ENCODE measurements at regions of chrX and their contacts with region 1.

Region 1: GRCh38 chrX:23901805-23902204 is 5.9 kb downstream of the APOO start:
- DNase-seq: peak; percentile 57 to 65
- ATAC-seq: peak; percentile 91

Region 2: DNA sequence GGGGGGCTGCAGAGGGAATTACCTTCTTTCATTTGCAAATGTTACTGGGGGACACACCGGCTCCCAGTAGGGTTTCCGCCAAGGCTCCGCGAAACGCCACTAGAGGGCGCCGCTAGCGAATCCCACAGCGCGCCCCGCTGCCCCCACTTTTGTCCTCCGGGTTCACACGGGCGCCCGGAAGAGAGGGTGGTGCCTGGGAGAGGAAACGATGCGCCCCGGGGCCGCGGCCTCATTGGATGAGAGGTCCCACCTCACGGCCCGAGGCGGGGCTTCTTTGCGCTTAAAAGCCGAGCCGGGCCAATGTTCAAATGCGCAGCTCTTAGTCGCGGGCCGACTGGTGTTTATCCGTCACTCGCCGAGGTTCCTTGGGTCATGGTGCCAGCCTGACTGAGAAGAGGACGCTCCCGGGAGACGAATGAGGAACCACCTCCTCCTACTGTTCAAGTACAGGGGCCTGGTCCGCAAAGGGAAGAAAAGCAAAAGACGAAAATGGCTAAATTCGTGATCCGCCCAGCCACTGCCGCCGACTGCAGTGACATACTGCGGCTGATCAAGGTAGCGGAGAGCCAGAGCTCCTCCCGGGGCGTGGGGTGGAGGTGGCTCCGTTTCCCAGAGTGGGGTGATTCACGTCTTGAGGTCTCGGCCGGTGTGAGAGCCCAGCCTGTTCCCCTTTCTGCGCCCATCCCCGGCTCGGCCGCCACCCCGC is 118.8 kb before region 1 on chrX and contains the start of gene SAT1:
- intact Hi-C with region 1: loop called in 1 of 2 experiments (anchors 5 kb)
- DNase-seq: peak; percentile 96 to 97
- ATAC-seq: peak; percentile 87
- total RNA-seq, gene SAT1: 499 to 508 TPM

Region 3: DNA sequence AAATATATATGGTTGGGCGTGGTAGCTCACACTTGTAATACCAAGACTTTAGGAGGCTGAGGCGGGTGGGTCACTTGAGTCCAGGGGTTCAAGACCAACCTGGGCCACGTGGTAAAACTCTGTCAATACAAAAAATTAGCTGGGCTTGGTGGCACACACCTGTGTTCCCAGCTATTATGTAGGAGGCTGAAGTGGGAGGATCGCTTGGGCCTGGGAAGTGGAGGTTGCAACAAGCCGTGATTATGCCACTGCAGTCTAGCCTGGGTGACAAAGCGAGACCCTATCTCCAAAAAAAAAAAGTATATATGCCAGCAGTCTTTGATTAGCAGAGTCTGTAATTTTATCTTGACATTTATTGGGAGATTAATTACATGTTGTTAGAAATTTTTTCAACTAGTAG is 161.7 kb after region 1 on chrX:
- intact Hi-C with region 1: no loop called
- DNase-seq: no peak
- ATAC-seq: no peak